SK-N-SH (cell line): ENCODE measurements at regions of chr7 and their contacts with region 1.

Region 1: GRCh38 chr7:129825496-129826267 is 127.1 kb downstream of the UBE2H start:
- DNase-seq: peak; percentile 97
- H3K4me3 ChIP-seq: peak overlapping the region; percentile 60 to 61
- H3K27ac ChIP-seq: peak overlapping the region; percentile 73 to 85
- H3K4me1 ChIP-seq: peaks cover 7 to 8% of the 10 kb centered on the region in 2 experiments; a peak in 3 of 4 replicates
- H3K27me3 ChIP-seq: no peaks in the 10 kb centered on the region
- CTCF ChIP-seq: peak; percentile 51
- EP300 ChIP-seq: no peak
- RAD21 ChIP-seq: peak; percentile 74

Region 2: GRCh38 chr7:129611246-129612111 is 214.2 kb before region 1 on chr7 and contains the start of gene NRF1:
- CTCF ChIA-PET with region 1: interaction called, 10 read pairs
- POLR2A ChIA-PET with region 1: interaction called, 4 read pairs
- DNase-seq: peak; percentile 98
- H3K4me3 ChIP-seq: peak within 1 kb of the TSS; percentile 79 to 95
- H3K27ac ChIP-seq: peak within 1 kb of the TSS; percentile 86 to 97
- H3K4me1 ChIP-seq: peaks cover 14 to 25% of the 10 kb centered on the region in 2 experiments
- H3K27me3 ChIP-seq: no peaks in the 10 kb centered on the region
- CTCF ChIP-seq: no peak
- EP300 ChIP-seq: peak in 1 of 2 experiments; percentile 92; a peak in 1 of 4 replicates
- RAD21 ChIP-seq: no peak
- polyA plus RNA-seq, gene NRF1: 10.9 and 16.9 TPM in 2 replicates

Region 3: DNA sequence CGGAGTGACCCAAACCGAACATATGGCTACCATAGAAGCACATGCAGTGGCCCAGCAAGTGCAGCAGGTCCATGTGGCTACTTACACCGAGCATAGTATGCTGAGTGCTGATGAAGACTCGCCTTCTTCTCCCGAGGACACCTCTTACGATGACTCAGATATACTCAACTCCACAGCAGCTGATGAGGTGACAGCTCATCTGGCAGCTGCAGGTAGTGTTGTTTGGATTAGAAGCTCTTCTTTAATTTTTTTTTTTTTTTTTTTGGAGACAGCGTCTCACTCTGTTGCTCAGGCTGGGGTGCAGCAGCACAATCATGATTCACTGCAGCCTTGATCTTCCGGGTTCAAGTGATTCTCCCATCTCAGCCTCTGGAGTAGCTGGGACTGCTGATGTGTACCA is 168.3 kb before region 1 on chr7:
- CTCF ChIA-PET with region 1: interaction called, 35 read pairs
- POLR2A ChIA-PET with region 1: no interaction called
- DNase-seq: no peak
- H3K4me3 ChIP-seq: no peak overlapping the region
- H3K27ac ChIP-seq: no peak overlapping the region
- H3K4me1 ChIP-seq: no peaks in the 10 kb centered on the region
- H3K27me3 ChIP-seq: no peaks in the 10 kb centered on the region
- CTCF ChIP-seq: no peak
- EP300 ChIP-seq: no peak
- RAD21 ChIP-seq: no peak

Region 4: GRCh38 chr7:129719980-129720732 is 105.5 kb before region 1 on chr7:
- CTCF ChIA-PET with region 1: interaction called, 11 read pairs
- POLR2A ChIA-PET with region 1: no interaction called
- DNase-seq: no peak
- H3K4me3 ChIP-seq: no peak overlapping the region
- H3K27ac ChIP-seq: no peak overlapping the region
- H3K4me1 ChIP-seq: peaks cover 0 to 2% of the 10 kb centered on the region in 2 experiments; a peak in 1 of 4 replicates
- H3K27me3 ChIP-seq: no peaks in the 10 kb centered on the region
- CTCF ChIP-seq: no peak
- EP300 ChIP-seq: no peak
- RAD21 ChIP-seq: no peak

Region 5: DNA sequence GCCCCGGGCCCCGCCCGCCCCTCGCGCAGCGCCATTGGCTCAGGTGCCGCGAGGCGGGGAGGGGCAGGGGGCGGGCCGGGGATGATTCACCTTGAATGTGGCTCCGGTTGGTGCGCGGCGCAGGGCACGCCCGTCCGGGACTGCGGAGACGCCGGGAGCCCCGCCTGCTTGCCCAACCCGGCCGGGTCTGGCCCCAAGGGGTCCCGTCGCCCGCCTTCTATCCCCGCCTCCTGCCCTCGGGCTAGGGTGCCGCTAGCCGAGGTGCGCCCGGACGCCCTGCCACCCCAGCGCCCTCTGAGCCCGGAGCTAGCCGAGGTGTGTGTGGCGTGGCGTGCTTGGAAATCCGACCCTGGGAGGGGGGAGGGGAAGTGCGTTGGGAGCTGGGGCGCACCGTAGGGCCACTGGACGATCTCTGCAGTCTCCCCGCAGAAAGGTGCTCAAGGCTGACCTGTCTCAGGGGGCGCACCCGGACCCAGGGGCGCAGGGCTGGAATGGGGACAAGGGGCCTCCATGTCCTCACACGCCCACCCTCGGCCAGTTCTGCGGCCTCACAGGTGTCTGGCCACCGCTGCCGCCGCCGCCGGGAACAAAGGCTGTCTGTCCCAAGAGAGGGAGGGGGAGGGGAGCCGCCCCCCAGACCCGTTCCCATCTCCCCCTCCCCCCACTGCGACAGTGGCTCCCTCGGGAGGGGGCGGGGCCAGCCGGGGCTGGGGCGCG is 45.3 kb before region 1 on chr7:
- CTCF ChIA-PET with region 1: interaction called, 18 read pairs
- POLR2A ChIA-PET with region 1: interaction called, 4 read pairs
- DNase-seq: peak; percentile 83
- H3K4me3 ChIP-seq: peak overlapping the region; percentile 63 to 91
- H3K27ac ChIP-seq: no peak overlapping the region
- H3K4me1 ChIP-seq: peaks cover 0 to 32% of the 10 kb centered on the region in 2 experiments; a peak in 1 of 4 replicates
- H3K27me3 ChIP-seq: peaks cover 45% of the 10 kb centered on the region
- CTCF ChIP-seq: no peak
- EP300 ChIP-seq: no peak
- RAD21 ChIP-seq: no peak

Region 6: DNA sequence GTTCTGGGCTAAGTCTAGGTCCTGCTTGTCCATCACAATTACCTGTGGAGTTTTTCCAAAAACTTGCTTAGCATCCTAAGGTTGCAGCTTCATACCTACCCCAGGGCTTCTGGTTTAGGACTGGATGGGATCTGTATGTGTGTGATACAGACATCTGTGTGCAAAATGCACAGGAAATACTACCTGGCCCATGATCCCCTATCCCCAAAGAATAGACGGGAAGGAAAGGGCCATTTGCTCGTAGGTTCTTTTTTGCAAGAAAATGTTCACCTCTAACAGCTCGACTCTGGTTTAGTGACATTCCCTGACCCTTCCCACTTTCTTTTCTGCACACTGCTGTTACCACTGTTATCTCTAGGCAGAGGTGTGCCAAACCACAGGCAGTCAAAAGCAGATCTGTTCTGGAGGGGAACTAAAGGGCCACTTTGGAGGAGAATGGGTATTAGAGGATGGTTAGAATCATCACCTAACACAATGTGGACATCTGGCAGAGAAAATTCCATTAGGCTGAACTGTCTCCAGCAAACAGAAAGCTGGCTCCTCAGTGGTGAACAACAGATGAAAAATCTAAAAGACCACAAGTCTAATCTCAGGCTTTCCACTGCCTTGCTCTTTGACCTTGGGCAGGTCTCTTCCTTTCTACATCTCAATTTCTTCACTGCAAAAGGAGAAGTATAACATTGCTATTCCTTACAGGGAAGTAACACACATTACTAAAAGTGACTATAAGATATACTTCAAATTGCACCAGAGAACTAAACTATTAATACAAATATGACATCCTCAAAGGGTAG is 19.7 kb after region 1 on chr7:
- CTCF ChIA-PET with region 1: interaction called, 54 read pairs
- POLR2A ChIA-PET with region 1: no interaction called
- DNase-seq: no peak
- H3K4me3 ChIP-seq: peak overlapping the region in 1 of 2 experiments; percentile 25; a peak in 1 of 4 replicates
- H3K27ac ChIP-seq: peak overlapping the region; percentile 87 to 95
- H3K4me1 ChIP-seq: peaks cover 28 to 49% of the 10 kb centered on the region in 2 experiments
- H3K27me3 ChIP-seq: no peaks in the 10 kb centered on the region
- CTCF ChIP-seq: no peak
- EP300 ChIP-seq: peak; percentile 74 to 97
- RAD21 ChIP-seq: no peak

Region 7: DNA sequence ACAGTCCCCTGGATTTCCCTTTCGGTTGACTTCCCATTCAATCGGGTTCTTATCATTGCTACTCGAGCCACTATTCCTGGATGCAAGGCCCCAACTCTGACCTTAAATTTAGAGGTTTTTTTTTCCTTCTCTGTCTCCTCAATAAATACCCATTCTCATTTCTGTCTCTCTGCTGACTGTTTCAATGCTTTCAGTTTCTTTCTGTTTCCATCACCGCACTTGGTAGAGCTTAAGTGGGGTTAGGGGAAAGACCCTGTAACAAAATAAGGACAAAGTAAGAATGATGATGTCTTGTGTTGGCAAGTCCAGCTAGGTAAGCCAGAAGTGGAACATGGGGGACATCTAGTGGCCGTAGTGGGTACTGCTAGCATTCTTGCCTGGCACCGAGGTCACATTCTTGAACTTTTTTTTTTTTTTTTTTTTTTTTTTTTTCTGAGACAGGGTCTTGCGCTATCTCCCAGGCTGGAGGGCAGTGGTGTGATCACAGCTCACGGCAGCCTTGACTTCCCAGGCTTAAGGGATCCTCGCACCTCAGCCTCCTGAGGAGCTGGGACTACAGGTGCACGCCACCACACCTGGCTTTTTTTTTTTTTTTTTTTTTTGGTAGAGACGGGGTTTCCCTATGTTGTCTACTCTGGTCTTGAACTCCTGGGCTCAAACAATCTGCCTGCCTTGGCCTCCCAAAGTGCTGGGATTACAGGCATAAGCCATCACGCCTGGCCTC is 185.2 kb after region 1 on chr7:
- CTCF ChIA-PET with region 1: interaction called, 162 read pairs
- POLR2A ChIA-PET with region 1: no interaction called
- DNase-seq: peak; percentile 83
- H3K4me3 ChIP-seq: no peak overlapping the region
- H3K27ac ChIP-seq: peak overlapping the region; percentile 43 to 92; a peak in 3 of 4 replicates
- H3K4me1 ChIP-seq: peaks cover 12 to 20% of the 10 kb centered on the region in 2 experiments; a peak in 3 of 4 replicates
- H3K27me3 ChIP-seq: no peaks in the 10 kb centered on the region
- CTCF ChIP-seq: peak; percentile 98
- EP300 ChIP-seq: 0 out of 4 replicates have a peak, but pooled peaks of 1 of the 2 experiments have one; percentile 5
- RAD21 ChIP-seq: peak; percentile 98